HepG2 (cell line): ENCODE measurements at regions of chr9 and their contacts with region 1.

Region 1: GRCh38 chr9:28024676-28025075 is 451.4 kb upstream of the C9orf72 start:
- DNase-seq: no peak
- ATAC-seq: no peak
- H3K4me3 ChIP-seq: no peak overlapping the region
- H3K27ac ChIP-seq: no peak overlapping the region
- H3K4me1 ChIP-seq: no peaks in the 10 kb centered on the region
- H3K27me3 ChIP-seq: no peaks in the 10 kb centered on the region
- CTCF ChIP-seq: no peak
- EP300 ChIP-seq: no peak
- POLR2A ChIP-seq: no peak
- RAD21 ChIP-seq: no peak

Region 2: DNA sequence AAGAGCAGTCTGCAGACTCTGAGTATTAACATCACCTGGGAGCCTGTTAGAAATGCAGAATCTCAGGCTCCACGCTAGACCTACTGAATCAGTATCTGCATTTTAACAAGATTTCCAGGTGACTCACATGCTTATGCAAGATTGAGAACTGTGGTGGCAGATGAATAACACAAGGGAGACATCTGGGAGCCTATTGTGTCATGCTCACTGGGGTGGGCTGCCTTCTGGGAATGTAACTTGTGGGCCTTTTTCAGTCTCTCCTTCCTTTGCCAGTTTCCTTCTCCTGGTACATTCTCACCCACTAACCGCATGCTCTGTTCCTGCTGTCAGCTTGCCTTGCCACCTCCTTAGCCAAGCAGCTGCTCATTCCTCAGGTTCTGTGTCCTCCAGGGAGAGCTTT is 274.8 kb before region 1 on chr9:
- CTCF ChIA-PET with region 1: no interaction called
- POLR2A ChIA-PET with region 1: no interaction called
- in situ Hi-C with region 1: no loop called
- intact Hi-C with region 1: no loop called
- DNase-seq: no peak
- ATAC-seq: no peak
- H3K4me3 ChIP-seq: no peak overlapping the region
- H3K27ac ChIP-seq: no peak overlapping the region
- H3K4me1 ChIP-seq: no peaks in the 10 kb centered on the region
- H3K27me3 ChIP-seq: no peaks in the 10 kb centered on the region
- CTCF ChIP-seq: no peak
- EP300 ChIP-seq: no peak
- POLR2A ChIP-seq: no peak
- RAD21 ChIP-seq: no peak

Region 3: GRCh38 chr9:27967210-27967609 is 57.5 kb before region 1 on chr9:
- CTCF ChIA-PET with region 1: no interaction called
- POLR2A ChIA-PET with region 1: no interaction called
- in situ Hi-C with region 1: loop called (anchors 10 kb)
- intact Hi-C with region 1: no loop called
- DNase-seq: no peak
- ATAC-seq: no peak
- H3K4me3 ChIP-seq: no peak overlapping the region
- H3K27ac ChIP-seq: no peak overlapping the region
- H3K4me1 ChIP-seq: no peaks in the 10 kb centered on the region
- H3K27me3 ChIP-seq: no peaks in the 10 kb centered on the region
- CTCF ChIP-seq: no peak
- EP300 ChIP-seq: no peak
- POLR2A ChIP-seq: no peak
- RAD21 ChIP-seq: no peak

Region 4: GRCh38 chr9:28135549-28135948 is 110.9 kb after region 1 on chr9:
- CTCF ChIA-PET with region 1: no interaction called
- POLR2A ChIA-PET with region 1: no interaction called
- in situ Hi-C with region 1: loop called (anchors 25 kb)
- intact Hi-C with region 1: no loop called
- DNase-seq: no peak
- ATAC-seq: no peak
- H3K4me3 ChIP-seq: no peak overlapping the region
- H3K27ac ChIP-seq: no peak overlapping the region
- H3K4me1 ChIP-seq: no peaks in the 10 kb centered on the region
- H3K27me3 ChIP-seq: no peaks in the 10 kb centered on the region
- CTCF ChIP-seq: no peak
- EP300 ChIP-seq: no peak
- POLR2A ChIP-seq: no peak
- RAD21 ChIP-seq: no peak

Region 5: DNA sequence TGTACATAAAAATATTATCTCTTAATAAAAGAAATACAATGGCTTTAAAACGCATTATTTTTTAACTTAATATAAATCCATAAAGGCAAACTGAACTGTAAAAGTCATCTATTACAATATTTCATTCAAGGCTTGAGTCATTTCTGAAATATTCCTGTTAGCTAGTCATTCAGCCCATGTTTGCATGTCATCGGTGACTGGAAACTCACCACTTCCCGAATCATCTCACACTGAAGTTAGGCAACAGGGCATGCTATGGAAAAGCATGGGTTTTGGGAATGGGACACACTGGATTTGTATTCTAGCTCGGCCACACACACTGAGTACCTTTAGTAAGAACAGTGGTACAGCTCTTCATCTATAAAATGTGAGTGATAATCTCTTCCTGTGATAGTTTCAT is 239.7 kb after region 1 on chr9:
- CTCF ChIA-PET with region 1: no interaction called
- POLR2A ChIA-PET with region 1: no interaction called
- in situ Hi-C with region 1: no loop called
- intact Hi-C with region 1: no loop called
- DNase-seq: no peak
- ATAC-seq: no peak
- H3K4me3 ChIP-seq: no peak overlapping the region
- H3K27ac ChIP-seq: no peak overlapping the region
- H3K4me1 ChIP-seq: no peaks in the 10 kb centered on the region
- H3K27me3 ChIP-seq: no peaks in the 10 kb centered on the region
- CTCF ChIP-seq: no peak
- EP300 ChIP-seq: no peak
- POLR2A ChIP-seq: no peak
- RAD21 ChIP-seq: no peak